Mammary epithelial cell (primary cell): ENCODE measurements at regions of chr5 and their contacts with region 1.

Region 1: DNA sequence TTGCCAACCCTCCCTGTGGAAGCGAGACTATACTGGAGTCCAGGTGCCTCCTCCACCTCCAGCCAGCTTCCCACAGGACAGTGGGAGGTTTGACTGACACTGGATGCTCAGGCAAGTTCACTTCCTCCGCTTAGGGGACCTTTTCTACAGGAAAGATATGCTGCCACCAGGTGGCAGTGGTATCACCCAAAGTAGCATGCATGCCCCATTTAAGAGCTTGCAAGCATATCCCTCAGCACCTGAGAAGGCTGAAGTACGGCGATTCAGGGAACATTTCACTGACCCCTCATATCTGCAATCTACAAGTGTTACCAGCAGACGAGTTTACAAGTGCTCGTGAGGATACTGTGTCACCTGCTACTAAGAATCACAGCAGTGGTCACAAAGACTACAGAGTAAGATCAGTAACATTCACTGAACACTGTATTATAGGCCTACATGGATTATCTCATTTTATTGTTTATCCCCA is 75.5 kb downstream of the KLHL3 start:
- DNase-seq: peak; percentile 61
- H3K4me3 ChIP-seq: no peak overlapping the region
- H3K27ac ChIP-seq: no peak overlapping the region
- H3K4me1 ChIP-seq: peaks cover 4% of the 10 kb centered on the region
- H3K27me3 ChIP-seq: no peaks in the 10 kb centered on the region
- CTCF ChIP-seq: peak; percentile 82 to 85

Region 2: GRCh38 chr5:137695651-137696428 is 35.5 kb after region 1 on chr5:
- CTCF ChIA-PET with region 1: no interaction called
- dilution Hi-C with region 1: no loop called
- in situ Hi-C with region 1: no loop called
- intact Hi-C with region 1: no loop called
- DNase-seq: no peak
- H3K4me3 ChIP-seq: no peak overlapping the region
- H3K27ac ChIP-seq: no peak overlapping the region
- H3K4me1 ChIP-seq: no peaks in the 10 kb centered on the region
- H3K27me3 ChIP-seq: no peaks in the 10 kb centered on the region
- CTCF ChIP-seq: no peak

Region 3: GRCh38 chr5:137735555-137736284 is 75.3 kb after region 1 on chr5 and contains the start of gene KLHL3:
- CTCF ChIA-PET with region 1: interaction called, 110 read pairs
- dilution Hi-C with region 1: no loop called
- in situ Hi-C with region 1: loop called in 1 of 2 experiments (anchors 10 kb)
- intact Hi-C with region 1: loop called (anchors 1 kb)
- DNase-seq: peak; percentile 63
- H3K4me3 ChIP-seq: peak within 1 kb of the TSS; percentile 23 to 52 (median 42)
- H3K27ac ChIP-seq: peak within 1 kb of the TSS; percentile 18
- H3K4me1 ChIP-seq: peaks cover 18% of the 10 kb centered on the region
- H3K27me3 ChIP-seq: no peaks in the 10 kb centered on the region
- CTCF ChIP-seq: peak in 1 of 2 donors; percentile 45
- total RNA-seq, gene KLHL3: 3.3 to 4.9 TPM

Region 4: GRCh38 chr5:137743031-137743640 is 82.8 kb after region 1 on chr5:
- CTCF ChIA-PET with region 1: interaction called, 110 read pairs
- dilution Hi-C with region 1: no loop called
- in situ Hi-C with region 1: loop called (anchors 5 to 10 kb)
- intact Hi-C with region 1: loop called (anchors 1 kb)
- DNase-seq: peak; percentile 51
- H3K4me3 ChIP-seq: no peak overlapping the region
- H3K27ac ChIP-seq: no peak overlapping the region
- H3K4me1 ChIP-seq: no peaks in the 10 kb centered on the region
- H3K27me3 ChIP-seq: no peaks in the 10 kb centered on the region
- CTCF ChIP-seq: peak; percentile 57 to 67